ENCODE measurements at regions of chr12 and their contacts with region 1.

Region 1: GRCh38 chr12:92145731-92146496 is at the start of gene BTG1:
- DNase-seq: peak; percentile 97 to 100
- ATAC-seq: peak; percentile 73 to 87 (median 77)
- H3K4me3 ChIP-seq: peak within 1 kb of the TSS; percentile 96
- H3K4me3 Mint-ChIP-seq: peak within 1 kb of the TSS; percentile 88
- H3K27ac ChIP-seq: peak within 1 kb of the TSS; percentile 94
- H3K27ac Mint-ChIP-seq: peak within 1 kb of the TSS; percentile 98 to 99
- H3K4me1 ChIP-seq: no peaks in the 10 kb centered on the region
- H3K4me1 Mint-ChIP-seq: peaks cover 31 to 43% of the 10 kb centered on the region in 2 donors
- H3K27me3 ChIP-seq: no peaks in the 10 kb centered on the region
- H3K27me3 Mint-ChIP-seq: no peaks in the 10 kb centered on the region
- CTCF ChIP-seq: no peak
- total RNA-seq, gene BTG1: 801 to 1,037 (median 830) TPM

Region 2: GRCh38 chr12:91382081-91382543 is 763.8 kb before region 1 on chr12:
- intact Hi-C with region 1: loop called (anchors 10 kb)
- DNase-seq: peak; percentile 75 to 92
- ATAC-seq: peak; percentile 79 to 88 (median 85)
- H3K4me3 ChIP-seq: no peak overlapping the region
- H3K4me3 Mint-ChIP-seq: no peak overlapping the region
- H3K27ac ChIP-seq: no peak overlapping the region
- H3K27ac Mint-ChIP-seq: peak overlapping the region in 1 of 2 donors; percentile 39
- H3K4me1 ChIP-seq: no peaks in the 10 kb centered on the region
- H3K4me1 Mint-ChIP-seq: peaks cover 9 to 10% of the 10 kb centered on the region in 2 donors
- H3K27me3 ChIP-seq: peaks cover 6% of the 10 kb centered on the region
- H3K27me3 Mint-ChIP-seq: peaks cover 24 to 34% of the 10 kb centered on the region in 2 donors
- CTCF ChIP-seq: peak; percentile 98

Region 3: GRCh38 chr12:91811481-91812287 is 334.2 kb before region 1 on chr12:
- intact Hi-C with region 1: loop called (anchors 2 kb)
- DNase-seq: peak; percentile 67 to 87
- ATAC-seq: peak; percentile 81 to 88 (median 87)
- H3K4me3 ChIP-seq: no peak overlapping the region
- H3K4me3 Mint-ChIP-seq: no peak overlapping the region
- H3K27ac ChIP-seq: no peak overlapping the region
- H3K27ac Mint-ChIP-seq: peak overlapping the region; percentile 76 to 78
- H3K4me1 ChIP-seq: no peaks in the 10 kb centered on the region
- H3K4me1 Mint-ChIP-seq: peaks cover 6 to 10% of the 10 kb centered on the region in 2 donors
- H3K27me3 ChIP-seq: no peaks in the 10 kb centered on the region
- H3K27me3 Mint-ChIP-seq: no peaks in the 10 kb centered on the region
- CTCF ChIP-seq: peak; percentile 95

Region 4: GRCh38 chr12:92034858-92035401 is 111.0 kb before region 1 on chr12:
- intact Hi-C with region 1: loop called (anchors 2 kb)
- DNase-seq: peak; percentile 26 to 79
- ATAC-seq: peak; percentile 56 to 69 (median 58)
- H3K4me3 ChIP-seq: peak overlapping the region; percentile 17
- H3K4me3 Mint-ChIP-seq: peak overlapping the region; percentile 96
- H3K27ac ChIP-seq: peak overlapping the region; percentile 71
- H3K27ac Mint-ChIP-seq: peak overlapping the region; percentile 97 to 98
- H3K4me1 ChIP-seq: peaks cover 36% of the 10 kb centered on the region
- H3K4me1 Mint-ChIP-seq: peaks cover 57 to 72% of the 10 kb centered on the region in 2 donors
- H3K27me3 ChIP-seq: no peaks in the 10 kb centered on the region
- H3K27me3 Mint-ChIP-seq: no peaks in the 10 kb centered on the region
- CTCF ChIP-seq: no peak

Region 5: DNA sequence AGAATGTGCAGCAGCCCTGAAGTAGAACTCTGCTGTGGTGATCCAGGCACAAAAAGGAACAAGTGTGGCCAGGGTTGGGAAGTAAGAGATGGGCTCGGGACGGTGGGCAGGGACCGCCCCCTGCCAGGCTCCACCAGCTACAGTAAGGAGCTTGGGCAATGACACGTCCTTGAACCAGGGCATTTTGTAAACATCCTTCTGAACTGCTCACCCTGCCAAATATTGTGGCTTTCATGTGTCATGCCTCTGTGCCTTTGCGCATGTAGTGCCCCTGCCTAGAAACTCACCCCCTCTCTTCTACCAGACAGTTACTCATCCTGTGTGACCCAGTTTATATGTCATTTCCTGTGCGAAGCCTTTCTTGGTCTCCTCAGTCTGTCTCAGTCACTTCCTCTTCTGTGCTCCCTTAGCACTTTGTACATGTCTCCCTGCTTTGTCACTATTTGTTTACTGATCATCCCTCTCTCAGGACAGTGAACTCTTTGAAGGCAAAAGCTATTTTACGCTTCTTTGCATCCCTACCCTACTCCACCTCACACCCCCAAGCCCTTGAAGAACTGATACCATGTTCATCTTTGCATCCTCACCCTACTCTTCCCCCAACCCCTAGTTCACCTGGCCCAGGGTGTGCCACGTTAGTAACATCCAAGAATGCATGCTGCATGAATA is 448.0 kb after region 1 on chr12:
- intact Hi-C with region 1: loop called (anchors 2 kb)
- DNase-seq: peak; percentile 70 to 96
- ATAC-seq: peak; percentile 86 to 97 (median 91)
- H3K4me3 ChIP-seq: no peak overlapping the region
- H3K4me3 Mint-ChIP-seq: peak overlapping the region; percentile 83
- H3K27ac ChIP-seq: peak overlapping the region; percentile 99
- H3K27ac Mint-ChIP-seq: peak overlapping the region; percentile 91 to 98
- H3K4me1 ChIP-seq: peaks cover 21% of the 10 kb centered on the region
- H3K4me1 Mint-ChIP-seq: peaks cover 33 to 49% of the 10 kb centered on the region in 2 donors
- H3K27me3 ChIP-seq: no peaks in the 10 kb centered on the region
- H3K27me3 Mint-ChIP-seq: no peaks in the 10 kb centered on the region
- CTCF ChIP-seq: no peak